Mucosa of descending colon (tissue), 3 donors: ENCODE measurements at regions of chr17 and their contacts with region 1.

Region 1: DNA sequence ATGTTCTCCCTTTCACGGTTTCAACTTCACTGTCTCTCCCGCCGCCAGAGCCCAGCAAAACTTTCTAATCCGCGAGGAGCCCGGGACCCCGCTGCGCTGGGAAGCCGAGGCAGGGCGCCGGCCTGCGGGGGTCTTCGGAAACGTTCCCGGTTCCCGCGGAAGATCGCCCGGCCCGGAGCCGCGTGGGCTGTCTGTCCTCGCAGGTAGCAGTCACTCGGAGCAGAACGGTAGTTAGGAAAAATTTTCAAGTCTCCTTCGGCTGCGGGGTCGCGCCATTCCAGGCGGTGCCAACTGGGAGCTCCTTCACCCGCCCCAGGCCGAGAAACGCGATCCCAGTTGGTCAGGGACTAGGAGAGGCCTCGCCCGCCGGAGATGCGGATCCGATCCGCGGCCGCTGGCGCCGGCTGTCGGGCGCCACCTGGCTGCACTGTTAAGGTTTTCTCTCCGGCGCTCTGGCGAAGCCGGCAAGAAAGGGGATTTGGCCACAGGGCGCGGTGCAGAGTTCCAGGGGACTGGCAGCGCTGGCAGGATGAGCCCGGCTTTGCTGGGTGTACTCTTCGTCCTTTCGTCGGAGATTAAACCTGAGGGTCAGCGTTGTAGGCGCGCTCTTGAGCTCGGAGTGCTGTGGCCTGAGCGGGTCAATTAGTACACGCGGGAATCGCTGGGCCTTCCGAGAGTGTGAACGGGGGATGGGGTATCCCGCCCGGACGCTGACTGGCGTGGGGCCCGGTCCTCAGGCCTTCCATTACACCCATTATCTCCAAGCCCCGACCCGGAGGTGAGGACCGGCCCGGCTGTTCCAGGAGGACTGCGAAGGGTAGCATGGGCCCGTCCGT is 135.4 kb downstream of the KCNJ12 start:
- DNase-seq: peak; percentile 81 to 88 (median 82)
- ATAC-seq: peak; percentile 97
- H3K4me3 ChIP-seq: no peak overlapping the region
- H3K4me1 ChIP-seq: peaks cover 3% of the 10 kb centered on the region
- CTCF ChIP-seq: peak; percentile 69

Region 2: GRCh38 chr17:21126645-21127510 is 384.7 kb before region 1 on chr17 and contains the start of gene DHRS7B:
- intact Hi-C with region 1: loop called in 1 of 2 experiments (anchors 10 kb)
- DNase-seq: peak; percentile 97 to 99 (median 98)
- ATAC-seq: peak; percentile 98
- H3K4me3 ChIP-seq: peak within 1 kb of the TSS; percentile 74
- H3K4me1 ChIP-seq: peaks cover 12% of the 10 kb centered on the region
- CTCF ChIP-seq: no peak
- total RNA-seq, gene DHRS7B: 21.9 to 34.0 (median 30.2) TPM

Region 3: DNA sequence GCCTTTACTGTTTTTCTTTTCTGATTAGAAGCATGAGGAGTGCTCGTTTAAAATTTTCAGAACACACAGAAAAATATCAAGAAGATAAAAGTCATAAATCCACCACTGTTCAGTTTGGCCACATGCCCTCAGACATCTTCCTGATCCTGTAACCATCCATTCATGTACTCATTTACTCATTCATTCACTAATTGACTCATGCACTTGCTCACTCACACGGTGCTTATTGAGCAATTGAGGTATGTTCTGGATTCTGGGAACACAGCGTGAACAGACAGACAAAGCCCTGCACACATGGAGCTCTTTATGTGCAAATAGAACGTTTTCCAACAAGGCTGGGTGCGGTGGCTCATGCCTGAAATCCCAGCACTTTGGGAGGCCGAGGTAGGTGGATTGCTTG is 248.2 kb before region 1 on chr17:
- intact Hi-C with region 1: loop called in 1 of 2 experiments (anchors 10 kb)
- DNase-seq: peak in 1 of 3 donors; percentile 5
- ATAC-seq: no peak
- H3K4me3 ChIP-seq: no peak overlapping the region
- H3K4me1 ChIP-seq: no peaks in the 10 kb centered on the region
- CTCF ChIP-seq: no peak

Region 4: GRCh38 chr17:21370430-21370829 is 141.2 kb before region 1 on chr17:
- intact Hi-C with region 1: no loop called
- DNase-seq: no peak
- ATAC-seq: no peak
- H3K4me3 ChIP-seq: no peak overlapping the region
- H3K4me1 ChIP-seq: no peaks in the 10 kb centered on the region
- CTCF ChIP-seq: no peak

Region 5: DNA sequence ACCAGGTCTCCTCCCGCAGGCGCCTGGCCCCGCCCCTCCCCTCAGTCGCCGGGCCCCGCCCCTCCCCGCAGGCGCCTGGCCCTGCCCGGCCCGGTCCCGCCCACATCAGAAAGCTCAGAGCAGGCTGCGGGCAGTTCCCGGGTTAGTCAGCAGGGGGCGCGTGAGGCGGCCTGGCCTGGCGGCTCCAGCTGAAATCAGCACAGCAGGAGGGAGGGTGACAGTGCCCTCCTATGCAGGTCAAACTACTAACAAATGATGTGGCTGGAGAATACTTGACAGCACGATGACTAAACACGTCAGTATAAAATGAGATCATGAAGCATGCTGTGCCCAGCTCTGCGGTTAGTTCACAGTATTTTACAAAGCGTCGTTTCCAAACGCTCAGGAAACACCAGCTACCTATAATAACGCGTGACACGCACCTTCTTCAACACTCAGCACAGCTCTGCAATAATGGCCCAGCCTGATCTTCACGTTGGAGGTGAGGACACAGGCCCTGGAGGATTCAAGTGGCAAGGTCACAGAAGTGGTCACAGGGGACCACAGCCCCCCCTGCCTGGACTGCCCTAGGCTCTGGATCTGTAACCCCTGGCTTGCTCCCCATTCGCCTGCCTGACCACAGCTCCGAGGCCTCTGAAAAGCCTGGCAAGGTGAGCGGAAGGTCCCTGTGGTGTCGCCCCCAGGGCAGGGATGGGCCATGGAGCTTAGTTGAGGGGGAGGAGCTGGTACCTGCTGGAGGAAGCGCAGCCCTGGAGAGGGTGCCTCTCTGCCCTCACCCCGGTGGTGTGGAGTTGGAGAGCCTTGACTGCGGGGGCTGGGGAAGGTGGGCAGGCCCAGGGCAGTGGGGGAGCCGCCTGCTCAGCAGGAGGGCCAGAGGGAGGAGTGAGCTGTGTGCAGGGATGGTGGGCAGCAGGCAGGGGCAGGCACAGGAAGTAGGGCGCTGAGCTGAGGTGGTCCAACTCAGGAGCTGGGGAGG is 54.2 kb before region 1 on chr17:
- intact Hi-C with region 1: loop called in 1 of 2 experiments (anchors 10 kb)
- DNase-seq: peak; percentile 90 to 98 (median 94)
- ATAC-seq: peak; percentile 99
- H3K4me3 ChIP-seq: no peak overlapping the region
- H3K4me1 ChIP-seq: peaks cover 3% of the 10 kb centered on the region
- CTCF ChIP-seq: peak; percentile 97

Region 6: DNA sequence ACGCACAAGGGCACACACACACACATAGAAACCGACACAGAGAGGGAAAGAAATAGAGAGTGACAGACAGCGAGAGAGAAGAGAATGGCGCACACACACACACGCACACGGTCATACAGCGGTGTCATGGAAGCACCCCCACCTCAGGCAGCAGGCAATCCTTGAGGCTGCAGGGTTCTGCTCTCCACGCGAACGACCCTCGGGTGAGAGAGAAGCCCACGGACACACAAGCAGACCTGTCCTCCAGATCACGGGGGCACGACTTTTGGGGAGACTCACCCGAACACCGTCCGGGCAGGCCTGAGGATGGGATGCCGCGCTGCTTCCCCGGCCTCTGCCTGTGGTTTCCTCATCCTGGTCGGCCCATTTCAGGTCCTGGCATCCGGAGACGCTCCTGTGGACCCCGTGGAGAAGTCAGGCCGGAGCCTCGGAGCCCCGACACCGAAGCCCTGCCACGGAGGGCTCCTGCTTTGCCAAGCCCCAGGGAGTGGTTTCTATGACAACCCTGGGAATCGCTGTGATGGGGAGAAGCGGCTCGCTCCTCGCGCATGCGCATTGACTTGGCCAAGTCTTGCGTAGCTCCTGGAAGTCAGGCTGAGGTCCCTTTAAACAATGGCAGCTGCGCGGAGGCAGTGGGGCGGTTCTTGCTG is 62.5 kb after region 1 on chr17:
- intact Hi-C with region 1: no loop called
- DNase-seq: peak in 2 of 3 donors; percentile 63 to 73
- ATAC-seq: peak; percentile 38
- H3K4me3 ChIP-seq: no peak overlapping the region
- H3K4me1 ChIP-seq: no peaks in the 10 kb centered on the region
- CTCF ChIP-seq: no peak

Region 7: GRCh38 chr17:21613071-21613429 is 101.5 kb after region 1 on chr17:
- intact Hi-C with region 1: no loop called
- DNase-seq: no peak
- ATAC-seq: no peak
- H3K4me3 ChIP-seq: no peak overlapping the region
- H3K4me1 ChIP-seq: no peaks in the 10 kb centered on the region
- CTCF ChIP-seq: no peak

Region 8: DNA sequence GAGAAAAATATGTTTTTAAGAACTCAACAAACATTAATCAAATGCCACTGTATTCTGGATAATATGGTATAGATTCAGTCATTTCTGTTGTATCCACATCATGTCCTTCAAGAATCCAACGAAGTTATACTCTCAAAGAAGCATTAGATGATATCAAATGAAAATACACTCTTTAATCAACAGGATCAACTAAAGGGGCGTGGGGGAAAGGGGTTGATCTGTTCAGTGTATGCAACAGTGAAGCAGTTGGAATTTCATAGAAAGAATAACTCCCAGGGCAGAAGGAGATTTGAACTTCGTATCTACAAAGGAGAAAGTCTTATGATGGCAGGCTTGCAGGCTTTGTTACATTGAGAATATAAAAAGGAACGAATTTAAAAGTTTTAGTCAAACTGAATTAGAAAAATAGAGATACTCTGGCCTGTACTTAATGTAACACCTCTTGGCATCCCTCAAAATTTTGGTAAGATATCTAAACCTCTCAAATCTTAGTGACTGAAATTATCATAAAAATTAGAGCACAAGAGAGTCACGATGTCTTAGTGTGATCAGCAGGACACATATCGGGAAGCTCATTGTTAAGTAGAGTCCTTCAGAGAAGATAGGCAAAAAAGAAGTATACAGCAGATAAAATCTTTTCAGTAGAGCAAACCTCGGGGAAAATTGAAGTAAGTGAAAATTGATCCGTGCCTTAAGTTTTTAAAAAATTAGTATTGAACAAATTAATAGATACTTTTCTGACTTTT is 612.1 kb after region 1 on chr17:
- intact Hi-C with region 1: no loop called
- DNase-seq: no peak
- ATAC-seq: no peak
- H3K4me3 ChIP-seq: no peak overlapping the region
- H3K4me1 ChIP-seq: no peaks in the 10 kb centered on the region
- CTCF ChIP-seq: no peak